GM23248 (cell line): ENCODE measurements at regions of chr1 and their contacts with region 1.

Region 1: DNA sequence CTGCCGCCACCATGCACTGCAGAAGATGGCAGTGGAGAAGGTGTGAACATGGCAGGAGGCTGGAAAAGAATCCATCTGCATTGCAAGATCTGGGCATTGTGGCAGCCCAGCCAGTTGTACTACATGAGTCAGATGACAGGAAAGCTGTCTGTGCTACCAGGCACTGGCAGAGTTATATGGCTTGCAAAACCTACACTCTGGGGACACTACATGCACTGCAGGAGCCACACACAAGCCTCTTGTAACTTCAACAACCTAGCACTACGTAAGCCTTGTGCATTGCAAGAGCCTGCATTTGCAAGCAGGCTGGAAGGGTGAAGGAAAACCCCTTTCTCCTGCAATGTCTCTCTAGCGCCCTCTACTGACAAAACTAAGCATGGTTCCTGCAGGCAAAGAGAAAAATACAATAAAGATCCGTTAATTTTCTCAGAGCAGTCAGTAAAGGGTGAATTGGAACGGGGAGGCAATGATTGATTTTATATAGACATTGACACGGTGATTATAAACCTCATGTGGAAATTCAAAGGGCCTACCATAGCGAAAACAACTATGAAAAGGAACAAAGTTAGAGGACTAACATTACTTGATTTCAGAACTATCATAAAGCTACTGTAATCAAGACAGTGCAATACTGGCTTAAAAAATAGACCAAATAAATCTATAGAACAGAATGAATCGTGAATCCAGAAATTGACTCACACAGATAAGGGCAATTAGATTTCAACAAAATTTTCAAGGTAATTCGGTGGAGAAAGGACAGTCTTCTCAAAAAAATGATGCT is 26.2 kb upstream of the DYNLT5 start:
- DNase-seq: peak; percentile 76
- H3K4me3 ChIP-seq: no peak overlapping the region
- H3K27ac ChIP-seq: no peak overlapping the region
- H3K4me1 ChIP-seq: peaks cover 21% of the 10 kb centered on the region
- H3K27me3 ChIP-seq: no peaks in the 10 kb centered on the region

Region 2: GRCh38 chr1:65958561-65959350 is 767.3 kb before region 1 on chr1:
- in situ Hi-C with region 1: loop called (anchors 25 kb)
- DNase-seq: peak; percentile 68
- H3K4me3 ChIP-seq: no peak overlapping the region
- H3K27ac ChIP-seq: no peak overlapping the region
- H3K4me1 ChIP-seq: no peaks in the 10 kb centered on the region
- H3K27me3 ChIP-seq: no peaks in the 10 kb centered on the region

Region 3: GRCh38 chr1:66253330-66253921 is 472.6 kb before region 1 on chr1:
- in situ Hi-C with region 1: loop called (anchors 5 kb)
- DNase-seq: peak; percentile 86
- H3K4me3 ChIP-seq: no peak overlapping the region
- H3K27ac ChIP-seq: no peak overlapping the region
- H3K4me1 ChIP-seq: peaks cover 26% of the 10 kb centered on the region
- H3K27me3 ChIP-seq: no peaks in the 10 kb centered on the region

Region 4: GRCh38 chr1:66598670-66599069 is 127.4 kb before region 1 on chr1:
- in situ Hi-C with region 1: no loop called
- DNase-seq: peak; percentile 82
- H3K4me3 ChIP-seq: peak overlapping the region; percentile 31
- H3K27ac ChIP-seq: peak overlapping the region; percentile 53
- H3K4me1 ChIP-seq: peaks cover 18% of the 10 kb centered on the region
- H3K27me3 ChIP-seq: no peaks in the 10 kb centered on the region